Activated CD4-positive, alpha-beta T cell treated with anti-CD3 and anti-CD28 coated beads, Interleukin-2, amount 10 ng/mL, durations not matched to agents 24 days and 14 days (primary cell): ENCODE measurements at regions of chr3 and their contacts with region 1.

Region 1: DNA sequence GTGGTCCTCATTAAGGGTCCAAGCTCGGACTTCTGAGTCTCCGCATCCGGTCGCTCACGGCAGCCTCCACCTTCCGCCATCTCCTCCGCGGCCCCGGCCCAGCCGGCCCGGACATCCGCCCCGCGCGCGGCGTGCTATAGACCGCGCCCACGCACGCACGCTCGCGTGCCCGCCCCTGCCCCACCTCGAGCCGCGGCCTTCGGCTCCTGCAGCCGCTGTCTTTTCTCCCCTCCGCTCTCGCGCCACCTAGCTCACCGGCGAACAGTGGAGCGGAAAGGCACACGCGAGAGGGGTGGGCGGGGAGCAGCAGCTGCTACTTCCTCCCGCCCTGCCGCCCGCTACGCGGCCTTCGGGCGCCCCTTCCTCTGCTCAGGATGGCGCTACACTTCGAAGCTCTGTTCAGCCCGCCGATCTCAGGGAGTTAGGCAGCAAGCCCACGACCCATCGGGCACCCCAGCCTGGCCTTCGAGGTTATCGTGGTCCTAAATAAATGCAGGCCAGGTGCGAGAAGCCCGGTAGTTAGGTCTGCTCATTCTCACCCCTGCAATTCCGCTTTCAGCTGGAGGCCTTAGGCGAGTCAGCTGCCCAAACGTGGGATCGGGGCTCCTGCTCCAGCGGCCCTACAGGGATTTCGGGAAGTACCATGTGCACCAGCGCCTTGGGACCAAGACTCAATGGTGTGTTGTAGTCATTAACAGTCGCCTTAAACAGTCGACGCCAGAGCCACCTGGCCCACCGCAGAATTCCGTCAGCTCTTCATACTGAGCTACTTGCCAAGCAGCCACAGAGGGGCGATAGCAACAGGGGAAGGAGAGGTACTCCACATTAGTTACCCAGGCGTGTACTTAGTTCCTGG is at the start of gene USP4:
- DNase-seq: peak; percentile 98
- H3K4me3 Mint-ChIP-seq: peak within 1 kb of the TSS; percentile 97
- H3K27ac Mint-ChIP-seq: peak within 1 kb of the TSS; percentile 98
- H3K4me1 Mint-ChIP-seq: peaks cover 43% of the 10 kb centered on the region
- H3K27me3 Mint-ChIP-seq: no peaks in the 10 kb centered on the region
- total RNA-seq, gene USP4: 94.0 and 96.9 TPM in 2 replicates

Region 2: DNA sequence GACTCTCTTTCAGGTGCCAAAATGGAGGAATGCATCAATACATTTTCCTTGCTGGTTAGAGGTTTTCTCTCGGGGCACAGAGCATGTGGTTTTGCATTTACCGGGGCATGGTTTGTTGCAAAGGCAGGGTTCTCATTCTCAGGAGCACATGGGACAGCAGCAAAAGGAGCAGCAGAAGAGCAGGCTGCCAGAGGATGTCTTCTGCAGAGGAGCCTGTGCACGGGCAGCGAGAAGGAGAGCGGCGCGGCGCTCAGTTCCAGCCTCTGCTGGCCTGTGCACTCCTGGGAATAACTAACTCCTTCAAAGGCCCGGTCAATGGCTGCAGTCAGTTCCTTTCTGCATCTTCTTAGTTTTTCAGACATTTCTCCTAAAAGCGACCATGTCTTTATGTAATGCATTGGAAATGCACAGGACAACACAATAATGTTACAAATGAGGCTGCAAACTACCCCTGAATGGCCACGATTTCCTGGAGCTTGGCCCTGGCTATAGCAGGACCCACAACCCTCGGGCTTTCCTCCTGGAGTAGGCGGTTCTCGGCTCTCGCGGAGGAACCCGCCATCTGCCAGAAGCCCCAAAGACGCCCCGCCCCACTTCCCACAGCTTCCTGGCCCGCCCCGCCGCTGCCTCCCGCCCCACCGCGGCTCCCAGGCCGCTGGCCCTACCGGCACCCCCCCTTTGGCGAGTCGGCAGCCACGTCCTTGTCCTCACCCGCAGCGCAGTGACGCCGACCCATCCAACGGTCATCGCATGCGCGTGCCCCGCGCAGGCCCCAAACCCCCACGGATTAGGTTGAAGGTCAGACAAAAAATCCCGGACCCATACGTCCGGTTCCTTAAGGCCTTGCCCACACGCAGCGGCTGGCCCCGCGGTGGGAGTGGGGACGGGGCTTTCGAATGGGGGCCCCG is 63.4 kb before region 1 on chr3 and contains the start of gene C3orf62:
- intact Hi-C with region 1: loop called (anchors 1 kb)
- DNase-seq: peak; percentile 94
- H3K4me3 Mint-ChIP-seq: peak within 1 kb of the TSS; percentile 78
- H3K27ac Mint-ChIP-seq: peak within 1 kb of the TSS; percentile 93
- H3K4me1 Mint-ChIP-seq: peaks cover 25% of the 10 kb centered on the region
- H3K27me3 Mint-ChIP-seq: no peaks in the 10 kb centered on the region
- total RNA-seq, gene C3orf62: 8.0 and 9.6 TPM in 2 replicates

Region 3: GRCh38 chr3:49351521-49352011 is 11.4 kb after region 1 on chr3:
- intact Hi-C with region 1: no loop called
- DNase-seq: no peak
- H3K4me3 Mint-ChIP-seq: no peak overlapping the region
- H3K27ac Mint-ChIP-seq: no peak overlapping the region
- H3K4me1 Mint-ChIP-seq: peaks cover 16% of the 10 kb centered on the region
- H3K27me3 Mint-ChIP-seq: no peaks in the 10 kb centered on the region

Region 4: GRCh38 chr3:49411968-49412631 is 71.9 kb after region 1 on chr3 and contains the starts of genes RHOA and TCTA:
- intact Hi-C with region 1: loop called (anchors 1 kb)
- DNase-seq: peak; percentile 100
- H3K4me3 Mint-ChIP-seq: peak within 1 kb of the TSS; percentile 94
- H3K27ac Mint-ChIP-seq: peak within 1 kb of the TSS; percentile 95
- H3K4me1 Mint-ChIP-seq: peaks cover 59% of the 10 kb centered on the region
- H3K27me3 Mint-ChIP-seq: peaks cover 2% of the 10 kb centered on the region
- total RNA-seq, gene RHOA: 381 and 391 TPM in 2 replicates
- total RNA-seq, gene TCTA: 18.7 and 21.2 TPM in 2 replicates

Region 5: DNA sequence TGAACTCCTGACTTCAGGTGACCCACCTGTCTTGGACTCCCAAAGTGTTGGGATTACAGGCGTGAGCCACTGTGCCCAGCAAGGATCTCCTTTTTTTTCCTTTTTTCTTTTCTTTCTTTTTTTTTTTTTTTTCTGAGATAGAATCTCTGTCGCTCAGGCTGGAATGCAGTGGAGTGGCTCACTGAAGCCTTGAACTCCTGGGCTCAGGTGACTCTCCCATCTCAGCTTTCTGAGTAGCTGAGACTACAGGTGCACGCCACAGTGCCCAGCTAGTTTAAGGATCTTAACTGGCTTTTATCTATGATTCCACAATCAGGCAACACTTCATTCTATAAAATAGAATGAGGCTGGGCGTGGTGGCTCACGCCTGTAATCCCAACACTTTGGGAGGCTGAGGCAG is 105.2 kb after region 1 on chr3:
- intact Hi-C with region 1: loop called (anchors 1 kb)
- DNase-seq: no peak
- H3K4me3 Mint-ChIP-seq: no peak overlapping the region
- H3K27ac Mint-ChIP-seq: no peak overlapping the region
- H3K4me1 Mint-ChIP-seq: peaks cover 12% of the 10 kb centered on the region
- H3K27me3 Mint-ChIP-seq: no peaks in the 10 kb centered on the region

Region 6: GRCh38 chr3:49469936-49470713 is 130.0 kb after region 1 on chr3 and contains the start of gene DAG1:
- intact Hi-C with region 1: loop called (anchors 1 kb)
- DNase-seq: peak; percentile 99
- H3K4me3 Mint-ChIP-seq: peak within 1 kb of the TSS; percentile 93
- H3K27ac Mint-ChIP-seq: peak within 1 kb of the TSS; percentile 91
- H3K4me1 Mint-ChIP-seq: peaks cover 21% of the 10 kb centered on the region
- H3K27me3 Mint-ChIP-seq: no peaks in the 10 kb centered on the region
- total RNA-seq, gene DAG1: 21.3 and 21.9 TPM in 2 replicates

Region 7: GRCh38 chr3:49566312-49566711 is 226.1 kb after region 1 on chr3:
- intact Hi-C with region 1: no loop called
- DNase-seq: no peak
- H3K4me3 Mint-ChIP-seq: no peak overlapping the region
- H3K27ac Mint-ChIP-seq: no peak overlapping the region
- H3K4me1 Mint-ChIP-seq: no peaks in the 10 kb centered on the region
- H3K27me3 Mint-ChIP-seq: peaks cover 16% of the 10 kb centered on the region